ENCODE measurements at regions of chr2 and their contacts with region 1.

Region 1: DNA sequence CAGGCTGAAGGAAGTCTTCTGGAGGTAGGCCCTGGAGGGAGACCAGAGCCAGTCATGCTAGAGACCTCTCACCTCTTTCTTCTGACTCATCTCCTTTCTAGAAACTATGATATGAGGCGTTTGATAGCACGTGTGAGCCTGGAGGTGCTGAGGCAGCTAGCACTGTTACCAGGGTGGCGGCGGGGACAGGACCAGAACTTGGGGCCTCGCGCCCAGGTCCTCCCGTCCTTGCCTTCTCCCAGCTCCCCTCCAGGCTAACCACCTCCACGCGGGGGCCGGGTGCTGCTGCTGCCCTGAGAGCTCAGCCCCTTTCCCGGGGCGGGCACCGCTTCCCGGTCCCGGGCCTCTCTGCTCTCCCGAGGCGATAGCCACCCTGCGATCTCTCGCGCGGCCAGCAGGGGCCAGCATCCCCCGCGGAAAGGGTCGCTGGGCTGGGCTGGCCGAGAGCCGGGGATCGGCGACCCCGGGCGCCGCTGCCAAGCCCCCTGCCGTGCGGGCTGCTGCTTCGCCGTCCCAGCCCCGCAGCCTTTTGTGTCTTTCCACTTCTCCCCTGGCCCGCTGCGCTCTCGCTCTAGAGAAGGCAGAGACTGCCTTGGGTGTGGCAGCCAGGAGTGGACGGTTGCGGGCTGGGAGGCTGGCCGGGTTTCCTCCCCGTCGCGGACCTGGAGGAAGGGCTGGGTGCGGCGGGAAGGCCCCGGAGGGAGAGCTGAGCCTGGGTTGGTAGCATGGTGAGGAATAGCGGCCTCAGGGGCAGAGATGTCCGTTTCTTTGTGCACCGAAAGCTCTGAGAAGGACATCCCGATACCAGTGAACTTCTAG is 49.1 kb downstream of the TMEM17 start:
- DNase-seq: peak; percentile 92
- H3K4me3 Mint-ChIP-seq: peak overlapping the region; percentile 64
- H3K27ac Mint-ChIP-seq: peak overlapping the region; percentile 50
- H3K4me1 Mint-ChIP-seq: peaks cover 21% of the 10 kb centered on the region
- H3K27me3 Mint-ChIP-seq: no peaks in the 10 kb centered on the region
- CTCF ChIP-seq: peak; percentile 97

Region 2: GRCh38 chr2:62570861-62571698 is 114.2 kb after region 1 on chr2:
- CTCF ChIA-PET with region 1: no interaction called
- intact Hi-C with region 1: loop called (anchors 2 kb)
- DNase-seq: peak; percentile 44
- H3K4me3 Mint-ChIP-seq: peak overlapping the region; percentile 70
- H3K27ac Mint-ChIP-seq: peak overlapping the region; percentile 94
- H3K4me1 Mint-ChIP-seq: peaks cover 65% of the 10 kb centered on the region
- H3K27me3 Mint-ChIP-seq: no peaks in the 10 kb centered on the region
- CTCF ChIP-seq: no peak

Region 3: DNA sequence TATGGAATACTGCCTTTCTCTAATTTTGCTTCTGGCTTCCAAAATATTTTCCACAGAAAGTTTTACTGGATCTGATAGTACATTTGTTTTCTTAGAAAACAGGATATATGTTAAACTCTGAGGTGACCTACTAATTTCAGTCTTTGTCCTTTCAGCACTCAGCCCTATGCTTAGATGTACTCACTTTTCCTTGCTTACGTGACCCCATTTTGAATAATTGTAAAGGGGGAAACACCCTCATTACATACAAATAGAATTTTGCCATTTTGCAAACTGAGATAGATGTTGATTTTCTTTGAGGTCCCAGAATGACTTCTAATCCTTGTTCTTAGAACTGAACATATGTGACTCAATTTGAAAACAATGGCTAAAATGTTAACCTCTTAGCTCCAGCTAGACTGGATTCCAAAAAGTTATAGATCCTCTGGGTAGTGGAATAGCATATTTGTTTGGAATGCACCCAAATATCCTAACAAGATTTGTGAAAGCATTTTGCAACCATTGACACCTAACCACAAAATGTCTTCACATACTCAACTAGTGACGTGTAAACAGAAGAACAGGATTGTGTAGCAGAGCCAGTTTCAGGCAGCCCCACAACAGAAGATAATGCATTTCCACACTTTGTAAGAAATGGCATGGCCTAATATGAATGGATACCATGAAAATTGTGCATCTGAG is 203.8 kb after region 1 on chr2:
- CTCF ChIA-PET with region 1: no interaction called
- intact Hi-C with region 1: loop called (anchors 5 kb)
- DNase-seq: peak; percentile 15
- H3K4me3 Mint-ChIP-seq: no peak overlapping the region
- H3K27ac Mint-ChIP-seq: peak overlapping the region; percentile 40
- H3K4me1 Mint-ChIP-seq: peaks cover 39% of the 10 kb centered on the region
- H3K27me3 Mint-ChIP-seq: no peaks in the 10 kb centered on the region
- CTCF ChIP-seq: no peak

Region 4: GRCh38 chr2:62705007-62705829 is 248.3 kb after region 1 on chr2 and contains the start of gene EHBP1:
- CTCF ChIA-PET with region 1: interaction called, 11 read pairs
- intact Hi-C with region 1: loop called (anchors 5 kb)
- DNase-seq: peak; percentile 99
- H3K4me3 Mint-ChIP-seq: peak within 1 kb of the TSS; percentile 87
- H3K27ac Mint-ChIP-seq: peak within 1 kb of the TSS; percentile 69
- H3K4me1 Mint-ChIP-seq: peaks cover 35% of the 10 kb centered on the region
- H3K27me3 Mint-ChIP-seq: no peaks in the 10 kb centered on the region
- CTCF ChIP-seq: no peak
- total RNA-seq, gene EHBP1: 82.9 and 89.2 TPM in 2 replicates

Region 5: GRCh38 chr2:62724886-62725711 is 268.2 kb after region 1 on chr2:
- CTCF ChIA-PET with region 1: interaction called, 7 read pairs
- intact Hi-C with region 1: loop called (anchors 5 kb)
- DNase-seq: peak; percentile 78
- H3K4me3 Mint-ChIP-seq: no peak overlapping the region
- H3K27ac Mint-ChIP-seq: peak overlapping the region; percentile 35
- H3K4me1 Mint-ChIP-seq: peaks cover 47% of the 10 kb centered on the region
- H3K27me3 Mint-ChIP-seq: no peaks in the 10 kb centered on the region
- CTCF ChIP-seq: peak; percentile 63

Region 6: DNA sequence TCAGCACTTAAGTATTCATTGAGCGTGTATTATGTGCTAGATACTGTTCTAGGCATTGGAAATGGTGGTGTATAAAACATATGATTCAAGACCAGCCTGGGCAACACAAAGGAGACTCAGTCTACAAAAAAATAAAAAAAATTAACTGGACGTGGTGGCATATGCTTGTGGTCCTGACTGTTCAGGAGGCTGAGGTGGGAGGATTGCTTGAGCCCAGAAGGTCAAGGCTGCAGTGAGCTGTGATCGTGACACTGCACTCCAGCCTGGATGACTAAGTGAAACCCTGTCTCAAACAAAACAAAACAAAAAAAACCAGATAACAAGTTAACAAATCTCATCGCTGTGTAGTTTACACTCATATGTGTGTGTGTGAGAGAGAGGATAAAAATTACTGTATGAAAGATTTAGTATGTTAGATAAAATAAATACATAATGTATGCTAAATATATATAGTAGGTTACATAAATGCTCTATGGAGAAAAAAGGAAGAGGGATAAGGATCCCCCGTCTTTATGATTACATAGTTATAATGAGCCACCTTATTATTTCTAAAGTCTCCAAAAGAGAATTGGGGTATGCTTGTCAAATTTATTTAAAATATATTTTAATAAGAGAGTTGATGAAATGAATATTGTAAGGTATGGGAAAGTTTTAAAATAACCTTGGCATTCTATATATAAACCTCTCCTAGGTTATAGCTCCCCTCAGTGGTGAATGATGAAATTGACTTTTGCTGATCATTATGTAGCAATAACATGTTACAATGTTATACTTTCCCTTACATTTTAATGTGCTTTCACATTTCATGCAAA is 317.8 kb after region 1 on chr2:
- CTCF ChIA-PET with region 1: interaction called, 32 read pairs
- intact Hi-C with region 1: loop called (anchors 1 kb)
- DNase-seq: peak; percentile 45
- H3K4me3 Mint-ChIP-seq: no peak overlapping the region
- H3K27ac Mint-ChIP-seq: peak overlapping the region; percentile 65
- H3K4me1 Mint-ChIP-seq: peaks cover 20% of the 10 kb centered on the region
- H3K27me3 Mint-ChIP-seq: no peaks in the 10 kb centered on the region
- CTCF ChIP-seq: peak; percentile 58

Region 7: DNA sequence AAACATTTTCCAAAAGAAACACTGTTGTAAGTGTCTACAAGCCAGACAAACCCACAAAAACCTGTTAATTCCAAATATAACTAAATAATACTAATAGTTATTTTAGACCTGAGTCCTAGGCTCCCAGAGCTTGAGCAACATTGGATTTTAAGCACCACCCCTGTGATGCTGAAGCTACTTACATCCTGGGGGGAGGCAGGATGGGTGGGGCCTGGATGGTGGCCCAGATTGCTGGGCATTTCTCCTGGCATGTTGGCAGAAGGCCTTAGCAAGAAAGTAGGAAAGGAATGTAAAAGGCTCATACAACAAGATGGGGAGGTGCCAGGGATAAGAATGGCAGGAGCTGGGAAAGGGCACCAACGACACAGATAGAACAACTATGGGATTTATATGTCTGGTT is 543.0 kb after region 1 on chr2:
- CTCF ChIA-PET with region 1: no interaction called
- intact Hi-C with region 1: no loop called
- DNase-seq: peak; percentile 7
- H3K4me3 Mint-ChIP-seq: no peak overlapping the region
- H3K27ac Mint-ChIP-seq: no peak overlapping the region
- H3K4me1 Mint-ChIP-seq: no peaks in the 10 kb centered on the region
- H3K27me3 Mint-ChIP-seq: no peaks in the 10 kb centered on the region
- CTCF ChIP-seq: no peak